ENCODE measurements at regions of chr18 and their contacts with region 1.

Region 1: DNA sequence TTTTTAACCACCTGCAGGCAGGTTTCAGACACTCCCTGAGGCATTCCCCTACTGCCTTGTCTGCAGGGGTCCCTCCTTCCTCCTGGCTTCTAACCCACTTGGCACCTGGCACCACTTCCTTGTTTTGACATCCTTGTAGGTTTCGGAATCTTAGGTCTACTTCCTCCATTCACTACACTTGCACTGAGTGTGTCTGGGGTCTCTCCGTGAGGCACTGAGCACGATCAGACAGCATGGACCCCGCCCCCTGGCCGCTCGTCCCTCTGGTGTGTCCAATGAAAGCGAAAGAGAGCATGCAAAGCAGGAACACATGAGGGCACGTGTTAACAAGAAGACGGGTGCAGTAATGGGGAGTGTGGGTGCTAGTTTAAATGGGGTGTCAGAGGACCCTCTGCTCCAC is 63.8 kb downstream of the HAUS1 start:
- DNase-seq: peak; percentile 69
- ATAC-seq: peak; percentile 97
- H3K4me3 Mint-ChIP-seq: peak overlapping the region; percentile 76
- H3K27ac Mint-ChIP-seq: peak overlapping the region; percentile 91
- H3K4me1 Mint-ChIP-seq: peaks cover 28% of the 10 kb centered on the region
- H3K27me3 Mint-ChIP-seq: no peaks in the 10 kb centered on the region
- CTCF ChIP-seq: no peak

Region 2: DNA sequence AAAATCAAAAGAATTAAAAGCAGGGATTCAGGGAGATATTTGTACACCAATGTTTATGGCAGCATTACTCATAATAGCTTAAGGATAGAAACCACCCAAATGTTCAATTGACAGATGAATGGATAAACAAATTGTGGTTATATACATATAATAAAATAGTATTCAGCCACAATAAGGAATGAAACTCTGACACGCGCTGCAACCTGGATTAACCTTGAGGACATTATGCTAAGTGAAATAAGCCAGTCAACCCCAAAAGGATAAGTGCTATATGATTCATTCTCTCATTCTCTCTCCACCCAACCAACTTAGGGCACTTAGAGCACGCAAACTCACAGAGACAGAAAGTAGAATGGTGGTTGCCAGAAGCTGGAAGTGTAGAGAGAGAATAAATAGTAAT is 769.5 kb before region 1 on chr18:
- CTCF ChIA-PET with region 1: no interaction called
- POLR2A ChIA-PET with region 1: no interaction called
- intact Hi-C with region 1: no loop called
- DNase-seq: no peak
- ATAC-seq: no peak
- H3K4me3 Mint-ChIP-seq: no peak overlapping the region
- H3K27ac Mint-ChIP-seq: no peak overlapping the region
- H3K4me1 Mint-ChIP-seq: no peaks in the 10 kb centered on the region
- H3K27me3 Mint-ChIP-seq: peaks cover 20% of the 10 kb centered on the region
- CTCF ChIP-seq: no peak

Region 3: DNA sequence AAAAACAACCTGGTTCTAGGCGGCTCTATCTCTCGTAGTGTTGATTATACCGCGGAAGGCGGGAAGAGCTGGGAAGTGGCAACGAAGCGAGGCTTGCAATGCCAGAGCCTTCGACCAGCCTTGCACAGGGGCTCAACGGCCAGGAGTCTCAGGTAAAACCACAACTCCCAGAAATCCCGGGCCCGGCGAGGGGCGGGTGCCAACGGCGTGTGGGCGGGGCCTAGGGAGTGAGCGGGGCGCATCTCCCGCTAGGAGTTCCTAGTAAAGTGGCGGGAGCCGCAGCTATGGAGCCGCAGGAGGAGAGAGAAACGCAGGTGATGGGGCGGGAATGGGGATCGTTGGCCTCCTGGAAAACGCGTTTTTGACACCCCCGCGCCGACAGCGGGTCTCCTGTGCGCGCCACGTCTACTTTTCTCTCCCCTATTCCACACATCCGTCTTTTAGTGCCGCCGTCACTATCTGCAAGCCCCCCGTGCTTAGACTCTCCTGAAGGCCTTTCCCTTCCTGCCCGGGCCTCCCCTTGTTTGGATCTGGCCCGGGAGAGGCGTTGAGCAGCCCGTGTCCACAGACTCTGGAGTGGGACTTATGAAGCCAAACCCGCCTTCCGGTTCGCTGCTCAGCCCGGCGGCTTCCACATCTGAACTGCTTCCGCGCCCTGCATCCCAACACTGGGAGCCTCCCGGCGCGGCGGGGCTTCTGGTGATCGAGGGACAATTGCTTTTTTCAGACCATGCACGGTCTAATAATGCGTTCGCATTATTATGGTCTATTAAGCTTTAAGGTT is 63.7 kb before region 1 on chr18 and contains the start of gene HAUS1:
- CTCF ChIA-PET with region 1: no interaction called
- POLR2A ChIA-PET with region 1: interaction called, 4 read pairs
- intact Hi-C with region 1: loop called (anchors 1 kb)
- DNase-seq: peak; percentile 81
- ATAC-seq: peak; percentile 99
- H3K4me3 Mint-ChIP-seq: peak within 1 kb of the TSS; percentile 98
- H3K27ac Mint-ChIP-seq: peak within 1 kb of the TSS; percentile 82
- H3K4me1 Mint-ChIP-seq: peaks cover 19% of the 10 kb centered on the region
- H3K27me3 Mint-ChIP-seq: no peaks in the 10 kb centered on the region
- CTCF ChIP-seq: no peak
- total RNA-seq, gene HAUS1: 34.6 and 39.5 TPM in 2 replicates

Region 4: DNA sequence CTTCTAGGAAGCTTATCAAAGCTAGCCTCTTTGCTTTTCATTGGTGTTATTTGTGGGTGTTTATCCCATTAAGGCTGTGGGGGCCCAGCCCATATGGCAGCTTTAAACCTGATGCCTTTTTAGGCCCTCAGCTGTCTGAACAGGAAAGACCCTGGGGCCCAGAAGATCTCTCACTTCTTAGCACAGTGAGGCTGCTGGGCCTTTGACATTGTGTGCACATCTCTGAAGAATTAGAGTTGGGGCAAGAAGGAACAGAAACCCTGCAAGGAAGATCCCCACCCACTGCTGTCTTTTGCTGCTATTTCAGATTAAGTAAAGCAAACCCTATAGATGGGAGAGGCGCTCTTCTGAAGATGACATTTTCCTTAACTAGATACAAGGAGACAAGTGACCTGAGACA is 1512.5 kb after region 1 on chr18:
- CTCF ChIA-PET with region 1: no interaction called
- POLR2A ChIA-PET with region 1: no interaction called
- intact Hi-C with region 1: loop called (anchors 10 kb)
- DNase-seq: no peak
- ATAC-seq: peak; percentile 72
- H3K4me3 Mint-ChIP-seq: peak overlapping the region; percentile 48
- H3K27ac Mint-ChIP-seq: peak overlapping the region; percentile 91
- H3K4me1 Mint-ChIP-seq: peaks cover 77% of the 10 kb centered on the region
- H3K27me3 Mint-ChIP-seq: no peaks in the 10 kb centered on the region
- CTCF ChIP-seq: no peak

Measured in activated B cell treated with CpG ODN at 0.5 μM for 24 hours (primary cell).